ENCODE measurements at regions of chr3 and their contacts with region 1.

Region 1: GRCh38 chr3:15205934-15206661 is at the start of gene CAPN7:
- DNase-seq: peak; percentile 94
- ATAC-seq: peak; percentile 90
- H3K4me3 Mint-ChIP-seq: peak within 1 kb of the TSS; percentile 78
- H3K27ac Mint-ChIP-seq: peak within 1 kb of the TSS; percentile 85
- H3K4me1 Mint-ChIP-seq: peaks cover 21% of the 10 kb centered on the region
- H3K27me3 Mint-ChIP-seq: no peaks in the 10 kb centered on the region
- CTCF ChIP-seq: no peak
- total RNA-seq, gene CAPN7: 22.2 to 27.5 TPM

Region 2: GRCh38 chr3:15098503-15099363 is 107.4 kb before region 1 on chr3 and contains the start of gene RBSN:
- CTCF ChIA-PET with region 1: interaction called, 5 read pairs
- POLR2A ChIA-PET with region 1: interaction called, 13 read pairs
- intact Hi-C with region 1: loop called (anchors 10 kb)
- DNase-seq: peak; percentile 98
- ATAC-seq: peak; percentile 90
- H3K4me3 Mint-ChIP-seq: peak within 1 kb of the TSS; percentile 90
- H3K27ac Mint-ChIP-seq: peak within 1 kb of the TSS; percentile 96
- H3K4me1 Mint-ChIP-seq: peaks cover 16% of the 10 kb centered on the region
- H3K27me3 Mint-ChIP-seq: peaks cover 2% of the 10 kb centered on the region
- CTCF ChIP-seq: no peak
- total RNA-seq, gene RBSN: 11.3 to 11.8 TPM

Region 3: GRCh38 chr3:15113463-15113862 is 92.6 kb before region 1 on chr3:
- CTCF ChIA-PET with region 1: interaction called, 106 read pairs
- POLR2A ChIA-PET with region 1: interaction called, 3 read pairs
- intact Hi-C with region 1: loop called (anchors 10 kb)
- DNase-seq: no peak
- ATAC-seq: no peak
- H3K4me3 Mint-ChIP-seq: no peak overlapping the region
- H3K27ac Mint-ChIP-seq: no peak overlapping the region
- H3K4me1 Mint-ChIP-seq: no peaks in the 10 kb centered on the region
- H3K27me3 Mint-ChIP-seq: peaks cover 2% of the 10 kb centered on the region
- CTCF ChIP-seq: no peak

Region 4: DNA sequence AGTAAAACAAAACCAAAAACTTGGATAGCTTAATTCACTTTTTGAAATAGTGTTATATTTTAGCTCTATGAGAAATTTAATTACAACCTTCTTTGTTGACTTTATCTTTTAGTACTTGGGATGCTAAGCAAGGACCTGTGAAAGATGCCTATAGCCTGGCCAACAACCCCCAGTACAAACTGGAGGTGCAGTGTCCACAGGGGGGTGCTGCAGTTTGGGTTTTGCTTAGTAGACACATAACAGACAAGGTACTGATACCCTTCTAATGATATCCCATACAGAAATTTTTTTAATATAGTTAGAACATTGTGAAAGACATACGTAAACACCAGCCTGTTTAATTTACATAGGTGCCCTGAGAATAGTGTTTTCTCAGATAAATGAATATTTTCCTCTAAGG is 35.2 kb after region 1 on chr3:
- CTCF ChIA-PET with region 1: interaction called, 14 read pairs
- POLR2A ChIA-PET with region 1: no interaction called
- intact Hi-C with region 1: no loop called
- DNase-seq: peak; percentile 62
- ATAC-seq: peak; percentile 58
- H3K4me3 Mint-ChIP-seq: no peak overlapping the region
- H3K27ac Mint-ChIP-seq: no peak overlapping the region
- H3K4me1 Mint-ChIP-seq: peaks cover 6% of the 10 kb centered on the region
- H3K27me3 Mint-ChIP-seq: no peaks in the 10 kb centered on the region
- CTCF ChIP-seq: peak; percentile 38

Region 5: GRCh38 chr3:15399970-15400369 is 193.9 kb after region 1 on chr3:
- CTCF ChIA-PET with region 1: interaction called, 125 read pairs
- POLR2A ChIA-PET with region 1: no interaction called
- intact Hi-C with region 1: loop called (anchors 2 kb)
- DNase-seq: peak; percentile 37
- ATAC-seq: peak; percentile 75
- H3K4me3 Mint-ChIP-seq: no peak overlapping the region
- H3K27ac Mint-ChIP-seq: no peak overlapping the region
- H3K4me1 Mint-ChIP-seq: peaks cover 15% of the 10 kb centered on the region
- H3K27me3 Mint-ChIP-seq: no peaks in the 10 kb centered on the region
- CTCF ChIP-seq: no peak

Region 6: GRCh38 chr3:15557511-15557946 is 351.4 kb after region 1 on chr3:
- CTCF ChIA-PET with region 1: interaction called, 22 read pairs
- POLR2A ChIA-PET with region 1: no interaction called
- intact Hi-C with region 1: no loop called
- DNase-seq: peak; percentile 82
- ATAC-seq: peak; percentile 98
- H3K4me3 Mint-ChIP-seq: no peak overlapping the region
- H3K27ac Mint-ChIP-seq: peak overlapping the region; percentile 68
- H3K4me1 Mint-ChIP-seq: peaks cover 17% of the 10 kb centered on the region
- H3K27me3 Mint-ChIP-seq: no peaks in the 10 kb centered on the region
- CTCF ChIP-seq: peak; percentile 85

Region 7: DNA sequence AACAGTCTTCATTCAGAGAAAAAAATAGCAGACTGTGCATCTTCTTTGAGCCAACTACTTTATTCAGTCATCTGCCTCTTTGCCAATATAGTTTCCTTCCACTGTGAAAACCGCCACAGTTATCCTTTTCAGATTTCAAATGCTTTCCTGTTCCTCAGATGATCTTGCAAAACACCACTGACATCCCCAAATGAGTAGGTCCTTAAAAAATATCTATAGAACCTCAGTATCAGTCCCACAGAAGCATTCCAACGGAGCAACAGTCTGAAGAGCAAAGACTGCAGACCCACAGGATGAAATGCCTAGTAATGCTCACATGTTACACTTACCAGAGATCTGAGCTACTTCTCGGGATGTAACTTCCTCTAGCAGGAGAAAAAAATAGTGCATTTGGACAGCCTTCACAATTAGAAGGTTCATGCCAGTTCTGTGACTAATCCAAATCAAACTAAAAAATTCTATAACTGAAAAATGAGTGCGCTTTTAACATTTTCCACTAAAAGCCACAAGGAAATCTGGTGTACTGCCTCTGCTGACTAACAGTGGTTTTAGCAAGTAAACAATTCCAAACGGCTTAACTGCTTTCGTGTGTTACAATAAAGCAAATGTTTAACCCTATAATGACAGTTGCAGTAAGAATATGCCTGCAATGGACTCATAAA is 591.7 kb after region 1 on chr3 and contains the start of gene ANKRD28:
- CTCF ChIA-PET with region 1: no interaction called
- POLR2A ChIA-PET with region 1: no interaction called
- intact Hi-C with region 1: no loop called
- DNase-seq: peak; percentile 21
- ATAC-seq: peak; percentile 66
- H3K4me3 Mint-ChIP-seq: peak within 1 kb of the TSS; percentile 74
- H3K27ac Mint-ChIP-seq: peak within 1 kb of the TSS; percentile 89
- H3K4me1 Mint-ChIP-seq: peaks cover 76% of the 10 kb centered on the region
- H3K27me3 Mint-ChIP-seq: no peaks in the 10 kb centered on the region
- CTCF ChIP-seq: no peak
- total RNA-seq, gene ANKRD28: 32.9 to 35.3 TPM